BJ (cell line): ENCODE measurements at regions of chr9 and their contacts with region 1.

Region 1: GRCh38 chr9:137034863-137035761 is 3.2 kb upstream of the FUT7 start:
- DNase-seq: no peak
- H3K4me3 ChIP-seq: no peak overlapping the region
- H3K27me3 ChIP-seq: no peaks in the 10 kb centered on the region
- CTCF ChIP-seq: peak; percentile 95

Region 2: GRCh38 chr9:136790927-136791641 is 244.0 kb before region 1 on chr9 and contains the start of gene TMEM141:
- CTCF ChIA-PET with region 1: interaction called, 52 read pairs
- POLR2A ChIA-PET with region 1: no interaction called
- DNase-seq: peak; percentile 94
- H3K4me3 ChIP-seq: peak within 1 kb of the TSS; percentile 99
- H3K27me3 ChIP-seq: peaks cover 3% of the 10 kb centered on the region
- CTCF ChIP-seq: no peak
- polyA plus RNA-seq, gene TMEM141: 51.5 and 62.5 TPM in 2 replicates

Region 3: DNA sequence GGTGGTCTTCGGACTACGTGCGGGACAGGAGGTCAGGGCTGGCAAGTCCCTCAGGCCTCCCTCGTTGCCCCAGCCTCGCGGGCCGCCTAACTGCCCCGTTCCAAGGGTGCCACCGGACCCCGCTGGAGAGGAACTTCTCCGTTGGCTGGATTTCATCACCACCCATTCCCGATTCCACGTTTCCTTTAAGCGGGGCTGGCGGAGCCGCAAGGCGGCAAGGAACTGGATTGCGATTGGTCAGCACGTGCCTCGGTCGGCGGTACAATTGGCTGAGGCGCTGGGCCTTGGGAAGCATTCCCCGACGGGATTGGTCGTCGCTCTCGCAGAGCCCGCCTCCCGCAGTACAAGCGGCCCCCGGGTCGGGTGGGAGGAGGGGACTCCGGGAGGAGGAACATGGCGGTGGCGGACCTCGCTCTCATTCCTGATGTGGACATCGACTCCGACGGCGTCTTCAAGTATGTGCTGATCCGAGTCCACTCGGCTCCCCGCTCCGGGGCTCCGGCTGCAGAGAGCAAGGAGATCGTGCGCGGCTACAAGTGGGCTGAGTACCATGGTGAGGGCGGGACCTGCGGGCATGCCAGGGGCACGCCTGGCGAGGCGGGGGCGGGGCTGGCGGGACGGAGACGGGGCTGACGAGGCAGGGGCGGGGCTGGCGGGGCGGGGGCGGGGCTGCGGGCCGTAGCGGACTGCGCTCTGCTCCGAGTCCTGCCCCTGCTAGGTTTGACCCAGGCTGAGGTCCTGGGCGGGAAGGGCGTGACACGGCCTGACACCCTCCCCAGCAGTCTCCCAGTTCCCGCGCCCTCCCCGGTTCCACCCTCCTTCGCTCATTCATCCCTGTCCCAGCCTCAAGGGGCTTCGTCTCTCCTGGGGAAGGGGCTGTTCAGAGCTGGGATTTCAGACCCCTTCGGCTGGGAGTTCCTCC is 185.8 kb before region 1 on chr9 and contains the start of gene PHPT1:
- CTCF ChIA-PET with region 1: interaction called, 27 read pairs
- POLR2A ChIA-PET with region 1: no interaction called
- DNase-seq: peak; percentile 94
- H3K4me3 ChIP-seq: peak within 1 kb of the TSS; percentile 84
- H3K27me3 ChIP-seq: 0 out of 2 replicates have a peak, but pooled peaks cover 6% of the 10 kb centered on the region
- CTCF ChIP-seq: no peak
- polyA plus RNA-seq, gene PHPT1: 116 and 233 TPM in 2 replicates

Region 4: DNA sequence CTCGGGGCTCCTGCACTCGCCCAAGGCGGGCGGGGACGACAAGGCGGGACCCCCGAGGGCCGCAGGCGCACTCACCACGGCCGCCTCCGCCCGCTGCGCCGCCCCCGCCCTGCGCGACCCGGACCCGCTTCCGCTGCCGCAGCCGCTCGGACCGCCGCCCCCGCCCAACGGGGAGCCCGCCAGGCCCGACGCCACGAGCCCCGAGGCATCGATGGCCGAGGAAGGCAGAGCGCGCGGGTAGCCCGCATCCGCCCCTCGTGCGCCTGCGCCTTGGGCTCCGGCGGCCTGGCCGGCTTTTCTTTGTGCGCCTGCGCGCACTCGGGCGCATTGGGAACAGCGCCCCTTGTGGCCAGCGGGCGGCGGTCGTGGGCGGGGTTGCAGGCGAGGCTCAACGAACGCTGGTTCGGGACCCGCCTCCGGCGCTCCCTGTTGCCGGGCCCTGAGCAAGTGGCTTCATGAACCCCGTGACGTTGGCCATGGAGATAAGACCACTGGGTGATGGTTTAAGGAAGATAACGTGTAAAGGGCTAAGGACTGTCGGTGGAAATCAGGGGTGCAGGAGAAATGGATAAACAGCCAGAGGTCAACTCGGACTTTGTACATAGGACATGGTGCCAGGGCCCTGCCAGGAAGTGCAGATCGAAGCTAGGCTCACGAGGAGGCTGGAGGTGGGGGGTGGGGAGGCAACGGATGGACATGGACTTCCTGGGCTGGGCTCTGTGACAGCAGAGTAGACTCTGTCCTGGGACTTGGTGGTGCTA is 90.4 kb before region 1 on chr9 and contains the starts of genes C8G and FBXW5:
- CTCF ChIA-PET with region 1: interaction called, 118 read pairs
- POLR2A ChIA-PET with region 1: no interaction called
- DNase-seq: peak; percentile 25
- H3K4me3 ChIP-seq: peak within 1 kb of the TSS; percentile 96
- H3K27me3 ChIP-seq: no peaks in the 10 kb centered on the region
- CTCF ChIP-seq: peak; percentile 93
- polyA plus RNA-seq, gene C8G: 0.48 and 0.60 TPM in 2 replicates
- polyA plus RNA-seq, gene FBXW5: 46.9 and 71.9 TPM in 2 replicates

Region 5: DNA sequence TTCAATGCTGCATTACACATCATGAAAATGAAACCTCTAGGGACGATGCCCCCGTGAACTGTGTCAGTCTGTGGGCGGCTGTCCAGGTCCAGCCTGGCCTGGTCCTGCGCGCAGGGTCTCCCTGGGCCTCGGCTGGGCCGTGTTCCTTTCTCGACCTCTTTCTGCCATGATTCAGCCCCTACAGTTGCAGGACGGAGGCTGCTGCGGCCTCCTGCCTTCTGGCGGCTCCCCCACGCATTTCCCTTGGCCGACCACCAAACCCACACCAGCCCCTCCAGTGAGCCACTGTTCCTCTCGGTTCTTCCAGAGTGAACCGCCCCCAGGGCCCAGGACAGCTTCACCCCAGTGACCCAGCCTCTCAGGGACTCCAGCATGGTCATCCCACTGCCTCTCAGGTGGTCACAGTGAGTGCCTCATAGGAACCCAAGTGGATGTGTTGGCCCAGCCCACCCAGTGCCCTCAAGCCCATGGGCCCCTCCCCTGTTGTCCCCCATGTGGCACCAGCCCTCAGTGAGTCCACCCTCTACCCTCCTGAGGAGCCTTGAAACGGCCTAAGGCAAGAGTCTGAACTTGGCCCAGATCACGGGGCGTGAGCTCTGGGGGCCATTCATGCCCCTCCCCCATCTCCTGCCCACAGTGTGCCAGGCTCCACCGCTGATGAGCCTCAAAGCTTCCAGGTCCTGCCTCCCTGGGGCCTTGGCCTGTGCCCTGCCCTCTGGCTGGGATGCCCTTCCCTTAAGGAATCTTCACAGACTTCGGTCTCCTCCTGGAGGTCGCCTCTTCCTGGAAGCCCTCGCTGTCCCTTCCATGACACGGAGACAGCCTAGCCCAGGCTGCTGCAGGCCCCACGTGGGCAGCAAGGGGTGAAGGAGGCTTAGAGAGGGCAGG is 28.8 kb before region 1 on chr9:
- CTCF ChIA-PET with region 1: interaction called, 18 read pairs
- POLR2A ChIA-PET with region 1: no interaction called
- DNase-seq: no peak
- H3K4me3 ChIP-seq: no peak overlapping the region
- H3K27me3 ChIP-seq: no peaks in the 10 kb centered on the region
- CTCF ChIP-seq: no peak

Region 6: GRCh38 chr9:137046098-137046787 is 11.1 kb after region 1 on chr9 and contains the start of gene NPDC1:
- CTCF ChIA-PET with region 1: interaction called, 27 read pairs
- POLR2A ChIA-PET with region 1: no interaction called
- DNase-seq: no peak
- H3K4me3 ChIP-seq: peak within 1 kb of the TSS; percentile 55
- H3K27me3 ChIP-seq: peaks cover 7% of the 10 kb centered on the region; the same call in 1 of the 2 replicates
- CTCF ChIP-seq: peak; percentile 95
- polyA plus RNA-seq, gene NPDC1: 21.8 and 31.9 TPM in 2 replicates

Region 7: DNA sequence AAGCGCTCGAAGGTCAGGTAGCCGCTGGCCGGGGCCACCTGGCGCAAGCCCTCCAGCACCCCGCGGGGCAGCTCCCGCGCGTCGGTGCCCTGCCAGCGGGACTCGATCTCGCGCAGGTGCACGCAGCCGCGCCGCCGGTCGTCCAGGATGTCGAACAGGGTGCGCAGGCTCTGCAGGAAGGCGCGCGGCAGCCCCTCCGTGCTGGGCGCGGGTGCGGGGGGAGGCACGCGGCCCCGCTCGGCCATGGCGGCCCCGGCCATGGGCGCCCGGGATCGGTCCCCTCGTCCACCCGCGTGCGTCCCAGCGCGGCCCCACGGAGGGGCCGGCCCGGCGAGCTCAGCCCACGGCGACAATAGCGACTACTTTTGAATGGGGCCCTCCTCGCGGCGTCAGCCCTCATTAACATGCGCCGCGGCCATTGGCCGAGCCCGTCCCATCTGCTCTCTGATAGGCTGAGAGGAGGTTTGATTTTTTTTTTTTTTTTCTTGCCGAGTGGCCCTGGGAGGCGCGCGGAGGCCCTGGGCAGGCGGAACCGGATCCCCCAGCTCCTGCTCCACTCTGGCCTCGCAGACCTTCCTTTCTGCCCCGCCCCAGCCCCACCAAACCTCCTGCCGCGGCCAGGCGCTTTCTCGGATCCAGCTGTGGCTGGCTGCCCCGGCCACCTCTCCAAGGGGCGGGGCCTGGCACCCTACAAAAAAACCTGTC is 35.2 kb after region 1 on chr9 and contains the start of gene SAPCD2:
- CTCF ChIA-PET with region 1: interaction called, 15 read pairs
- POLR2A ChIA-PET with region 1: no interaction called
- DNase-seq: no peak
- H3K4me3 ChIP-seq: peak within 1 kb of the TSS; percentile 39
- H3K27me3 ChIP-seq: no peaks in the 10 kb centered on the region
- CTCF ChIP-seq: no peak
- polyA plus RNA-seq, gene SAPCD2: 5.1 and 8.6 TPM in 2 replicates

Region 8: DNA sequence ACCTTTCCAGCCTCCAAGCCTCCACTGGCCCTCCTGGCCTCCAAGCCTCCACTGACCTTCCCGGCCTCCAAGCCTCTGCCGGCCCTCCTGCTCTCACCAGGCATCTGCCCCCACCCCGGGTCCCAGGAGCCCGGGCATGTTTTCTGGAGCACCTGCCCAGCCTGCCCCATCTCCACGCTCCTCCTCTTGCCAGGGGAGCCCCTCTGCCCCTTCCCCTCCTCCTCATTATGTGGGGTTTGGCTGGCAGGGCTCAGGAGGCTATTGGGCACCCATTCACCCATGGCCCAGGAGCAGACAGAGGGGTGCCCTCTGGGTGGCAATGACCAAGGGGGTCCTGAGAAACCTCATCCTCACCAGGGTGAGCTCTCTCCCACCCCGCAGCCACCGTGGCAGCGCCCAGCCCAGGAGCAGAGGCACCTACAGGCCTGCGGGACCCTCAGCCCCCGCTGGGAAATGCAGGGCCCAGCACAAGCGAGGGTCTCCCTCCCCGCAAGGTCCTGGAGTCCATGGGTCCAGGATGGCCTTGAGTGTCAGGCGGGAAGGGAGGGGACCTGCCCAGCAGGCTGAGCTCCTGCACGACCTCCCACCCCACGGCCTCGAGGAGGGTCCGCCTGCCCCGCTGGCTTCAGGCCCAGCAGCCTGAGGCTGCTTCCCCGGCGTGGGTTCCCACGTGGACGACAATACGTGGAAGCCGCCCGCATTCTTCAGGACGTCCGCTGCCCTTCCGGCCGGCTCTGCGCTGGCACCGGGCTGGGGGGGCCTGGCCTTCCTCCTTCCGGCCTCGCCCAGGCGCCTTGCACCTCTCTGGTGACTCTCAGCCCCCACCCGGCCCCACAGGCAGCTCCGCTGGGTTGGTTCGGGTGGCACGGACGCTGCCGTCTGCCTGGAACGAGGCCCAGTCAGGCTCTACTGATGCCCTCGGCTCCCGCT is 318.4 kb after region 1 on chr9:
- CTCF ChIA-PET with region 1: no interaction called
- POLR2A ChIA-PET with region 1: no interaction called
- DNase-seq: no peak
- H3K4me3 ChIP-seq: no peak overlapping the region
- H3K27me3 ChIP-seq: no peaks in the 10 kb centered on the region
- CTCF ChIP-seq: no peak